CD4-positive, alpha-beta T cell (primary cell): ENCODE measurements at regions of chr22 and their contacts with region 1.

Region 1: DNA sequence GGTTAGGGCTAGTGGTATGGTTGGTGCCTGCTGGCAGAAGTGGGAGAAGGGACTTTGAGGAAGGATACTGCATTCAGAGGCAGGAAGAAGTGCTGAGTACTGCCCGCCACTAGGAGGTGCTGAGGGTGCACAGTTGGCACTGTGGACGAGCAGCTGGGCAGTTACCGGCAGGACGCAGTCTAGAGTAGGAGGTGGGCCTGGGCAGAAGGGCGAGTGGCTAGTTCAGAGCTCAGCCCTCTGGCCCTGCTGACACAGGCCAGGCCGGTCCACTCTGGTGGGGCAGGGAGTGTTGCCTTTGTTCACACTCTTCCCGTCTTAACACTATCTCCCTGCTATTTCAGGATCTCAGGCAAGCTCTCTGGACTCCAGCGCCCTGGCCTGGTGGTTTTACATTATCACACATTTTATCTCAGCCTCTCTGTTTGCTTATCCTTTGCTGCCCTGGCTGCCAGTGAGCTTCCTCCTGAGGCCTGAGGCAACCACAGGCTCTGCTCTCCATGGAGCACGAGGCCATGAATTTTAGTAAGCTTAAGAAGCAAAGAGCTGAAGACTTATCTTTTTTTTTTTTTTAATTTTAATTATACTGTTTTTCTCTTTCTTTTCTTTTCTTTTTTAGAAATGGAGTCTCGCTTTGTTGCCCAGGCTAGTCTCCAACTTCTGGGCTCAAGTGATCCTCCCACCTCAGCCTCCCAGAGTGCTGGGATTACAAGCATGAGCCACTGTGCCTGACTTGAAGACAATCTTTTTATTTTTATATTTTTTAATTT is 26.9 kb downstream of the SNAP29 start:
- DNase-seq: peak in 12 of 14 experiments; percentile 7 to 67 (median 26)
- ATAC-seq: peak; percentile 41
- H3K4me3 ChIP-seq: no peak overlapping the region
- H3K4me3 Mint-ChIP-seq: no peak overlapping the region
- H3K27ac ChIP-seq: no peak overlapping the region
- H3K27ac Mint-ChIP-seq: no peak overlapping the region
- H3K4me1 ChIP-seq: no peaks in the 10 kb centered on the region
- H3K4me1 Mint-ChIP-seq: no peaks in the 10 kb centered on the region
- H3K27me3 ChIP-seq: no peaks in the 10 kb centered on the region
- H3K27me3 Mint-ChIP-seq: no peaks in the 10 kb centered on the region
- CTCF ChIP-seq: peak; percentile 52

Region 2: GRCh38 chr22:20771918-20772625 is 113.7 kb before region 1 on chr22:
- CTCF ChIA-PET with region 1: no interaction called
- POLR2A ChIA-PET with region 1: no interaction called
- intact Hi-C with region 1: no loop called
- DNase-seq: no peak
- ATAC-seq: no peak
- H3K4me3 ChIP-seq: no peak overlapping the region
- H3K4me3 Mint-ChIP-seq: no peak overlapping the region
- H3K27ac ChIP-seq: no peak overlapping the region
- H3K27ac Mint-ChIP-seq: no peak overlapping the region
- H3K4me1 ChIP-seq: no peaks in the 10 kb centered on the region
- H3K4me1 Mint-ChIP-seq: no peaks in the 10 kb centered on the region
- H3K27me3 ChIP-seq: no peaks in the 10 kb centered on the region
- H3K27me3 Mint-ChIP-seq: no peaks in the 10 kb centered on the region
- CTCF ChIP-seq: no peak

Region 3: DNA sequence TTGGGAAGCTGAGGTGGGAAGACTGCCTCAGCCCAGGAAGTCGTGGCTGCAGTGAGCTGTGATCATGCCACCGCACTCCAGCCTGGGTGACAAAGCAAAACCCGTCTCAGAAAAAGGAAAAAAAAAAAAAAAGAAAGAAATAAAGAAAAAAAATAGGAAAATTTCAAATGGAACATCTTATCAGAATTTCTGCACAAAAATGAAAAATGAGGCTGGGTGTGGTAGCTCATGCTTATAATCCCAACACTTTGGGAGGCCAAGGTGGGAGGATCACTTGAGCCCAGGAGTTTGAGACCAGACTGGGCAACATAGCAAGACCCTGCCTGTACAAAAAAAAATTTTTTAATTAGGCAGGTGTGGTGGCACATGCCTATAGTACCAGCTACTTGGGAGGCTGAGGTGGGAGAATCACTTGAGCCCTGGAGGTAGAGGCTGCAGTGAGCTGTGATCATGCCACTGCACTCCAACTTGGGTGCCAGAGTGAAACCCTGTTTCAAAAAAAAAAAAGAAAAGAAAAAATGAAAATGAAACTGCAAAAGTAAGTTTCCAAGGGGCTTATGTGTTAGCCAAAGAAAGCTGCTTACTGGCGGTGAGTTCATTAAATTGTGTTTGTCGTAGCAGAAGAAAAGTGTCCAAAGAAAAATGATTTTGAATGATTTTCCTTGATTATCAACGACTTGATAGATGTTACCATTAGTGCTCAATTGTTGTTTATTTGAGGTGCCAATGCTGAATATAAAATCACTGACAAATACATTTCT is 24.0 kb after region 1 on chr22:
- CTCF ChIA-PET with region 1: no interaction called
- POLR2A ChIA-PET with region 1: interaction called, 3 read pairs
- intact Hi-C with region 1: loop called in 1 of 2 experiments (anchors 2 kb)
- DNase-seq: no peak
- ATAC-seq: no peak
- H3K4me3 ChIP-seq: no peak overlapping the region
- H3K4me3 Mint-ChIP-seq: no peak overlapping the region
- H3K27ac ChIP-seq: no peak overlapping the region
- H3K27ac Mint-ChIP-seq: no peak overlapping the region
- H3K4me1 ChIP-seq: no peaks in the 10 kb centered on the region
- H3K4me1 Mint-ChIP-seq: peaks cover 4% of the 10 kb centered on the region
- H3K27me3 ChIP-seq: no peaks in the 10 kb centered on the region
- H3K27me3 Mint-ChIP-seq: no peaks in the 10 kb centered on the region
- CTCF ChIP-seq: no peak